ENCODE measurements at regions of chr15 and their contacts with region 1.

Region 1: DNA sequence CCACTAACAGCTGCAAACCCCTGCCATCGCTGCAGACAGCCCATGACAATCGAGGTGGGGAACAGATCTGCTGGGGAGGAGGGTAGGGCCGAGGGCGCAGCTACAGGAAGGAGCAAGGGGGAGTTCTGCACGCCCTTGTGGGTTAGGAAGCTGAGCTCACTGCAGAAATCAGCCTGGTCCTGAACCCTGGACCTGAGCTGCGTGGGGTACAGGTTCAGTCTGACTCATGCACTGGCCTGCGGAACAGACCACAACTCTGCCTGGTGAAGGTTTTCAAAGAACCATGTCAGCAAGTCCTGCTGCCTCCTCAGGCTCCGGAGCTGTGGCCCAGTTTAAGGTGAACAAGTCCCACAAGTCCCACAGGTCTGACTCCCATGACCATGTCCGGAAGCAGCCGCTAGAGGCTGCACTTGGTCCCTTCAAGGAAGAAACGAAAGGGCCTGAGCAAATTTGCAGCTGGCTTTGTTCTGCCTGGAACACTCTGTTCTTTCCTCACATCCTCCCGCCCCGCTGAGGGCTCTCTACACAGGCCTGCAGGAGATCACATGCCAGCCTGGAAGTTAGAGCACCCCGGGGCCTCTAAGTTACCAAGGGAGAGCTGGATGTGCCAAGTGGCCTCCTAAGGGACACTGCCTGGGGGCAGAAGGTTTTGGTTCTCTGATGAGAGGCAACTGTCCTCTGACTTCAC is 49.4 kb upstream of the AKAP13 start:
- DNase-seq: peak; percentile 90
- ATAC-seq: peak; percentile 93

Region 2: GRCh38 chr15:85504749-85505676 is 174.0 kb after region 1 on chr15:
- intact Hi-C with region 1: loop called in 1 of 2 experiments (anchors 10 kb)
- DNase-seq: peak; percentile 42
- ATAC-seq: peak; percentile 52 to 56

Measured in left cardiac atrium (tissue), 4 donors.